ENCODE measurements at regions of chr6 and their contacts with region 1.

Region 1: DNA sequence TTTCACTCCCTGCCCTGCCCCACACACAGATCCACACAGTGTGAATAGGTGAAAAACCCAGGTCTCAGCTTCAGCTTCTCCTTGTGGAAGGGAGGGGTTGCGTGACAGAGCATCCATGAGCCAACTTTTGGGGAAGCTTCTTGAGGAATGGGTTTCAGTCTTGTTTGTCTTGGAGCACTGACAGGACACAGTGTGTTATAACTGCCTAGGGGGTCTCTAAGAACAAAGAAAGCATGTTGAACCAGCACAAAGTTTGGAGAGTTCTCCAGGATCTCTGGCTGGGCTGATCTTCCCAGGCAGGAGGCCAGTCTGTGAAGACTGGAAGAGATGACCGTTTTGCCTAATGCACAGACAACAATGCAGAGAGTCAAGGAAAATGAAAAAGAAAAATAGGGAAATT is 164.5 kb downstream of the COL12A1 start:
- DNase-seq: no peak
- ATAC-seq: no peak
- H3K4me3 ChIP-seq: no peak overlapping the region
- H3K4me3 Mint-ChIP-seq: no peak overlapping the region
- H3K27ac ChIP-seq: no peak overlapping the region
- H3K27ac Mint-ChIP-seq: no peak overlapping the region
- H3K4me1 ChIP-seq: no peaks in the 10 kb centered on the region
- H3K4me1 Mint-ChIP-seq: no peaks in the 10 kb centered on the region
- H3K27me3 ChIP-seq: no peaks in the 10 kb centered on the region
- H3K27me3 Mint-ChIP-seq: no peaks in the 10 kb centered on the region
- CTCF ChIP-seq: no peak

Region 2: DNA sequence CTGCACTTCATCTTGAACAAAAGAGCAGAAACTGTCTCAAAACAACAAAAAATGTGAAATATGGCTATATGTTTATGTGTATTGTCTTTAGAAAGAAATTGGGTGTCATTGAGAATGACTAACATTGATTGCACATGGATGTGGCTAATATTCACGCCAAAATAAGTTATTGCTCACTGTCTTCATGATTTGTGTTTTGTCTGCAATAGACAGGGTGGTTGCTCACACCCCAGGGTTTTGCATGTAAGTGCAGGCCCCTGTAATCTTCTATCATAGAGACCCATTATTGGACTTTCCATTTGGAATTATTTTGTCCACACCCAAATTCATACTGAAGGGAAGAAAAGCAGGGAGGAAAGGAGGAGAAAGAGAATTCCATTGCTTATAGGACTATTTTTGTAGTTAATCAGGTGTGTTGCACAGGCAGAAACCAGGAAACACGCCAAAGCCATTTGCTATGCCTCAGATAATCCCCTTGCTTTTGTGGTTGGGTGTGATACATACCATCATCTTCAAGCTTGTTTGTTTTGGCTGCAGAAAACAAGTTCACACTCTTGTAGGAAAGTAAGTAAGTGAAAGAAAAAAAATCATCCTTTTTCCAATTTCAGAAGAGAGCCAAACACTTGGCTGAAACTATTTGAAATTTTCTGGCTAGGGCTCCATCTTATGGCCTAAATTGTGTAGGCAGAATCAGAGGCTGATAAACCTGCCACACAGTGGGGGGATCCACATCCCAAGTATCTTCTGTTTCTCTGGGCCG is 49.6 kb before region 1 on chr6:
- CTCF ChIA-PET with region 1: no interaction called
- POLR2A ChIA-PET with region 1: no interaction called
- intact Hi-C with region 1: loop called in 1 of 2 experiments (anchors 1 kb)
- DNase-seq: no peak
- ATAC-seq: no peak
- H3K4me3 ChIP-seq: no peak overlapping the region
- H3K4me3 Mint-ChIP-seq: no peak overlapping the region
- H3K27ac ChIP-seq: no peak overlapping the region
- H3K27ac Mint-ChIP-seq: no peak overlapping the region
- H3K4me1 ChIP-seq: no peaks in the 10 kb centered on the region
- H3K4me1 Mint-ChIP-seq: no peaks in the 10 kb centered on the region
- H3K27me3 ChIP-seq: no peaks in the 10 kb centered on the region
- H3K27me3 Mint-ChIP-seq: no peaks in the 10 kb centered on the region
- CTCF ChIP-seq: no peak

Measured in CD8-positive, alpha-beta T cell (primary cell).